Activated naive CD8-positive, alpha-beta T cell treated with anti-CD3 and anti-CD28 coated beads, Interleukin-2, amount 10 ng/mL, durations not matched to agents 7 days and 5 days (primary cell): ENCODE measurements at regions of chr19 and their contacts with region 1.

Region 1: GRCh38 chr19:861763-862580 is 2.5 kb downstream of the CFD start:
- DNase-seq: peak; percentile 81
- ATAC-seq: peak; percentile 23
- H3K4me3 Mint-ChIP-seq: peak overlapping the region; percentile 74
- H3K27ac Mint-ChIP-seq: no peak overlapping the region
- H3K4me1 Mint-ChIP-seq: peaks cover 11% of the 10 kb centered on the region
- H3K27me3 Mint-ChIP-seq: peaks cover 20% of the 10 kb centered on the region

Region 2: GRCh38 chr19:907183-907853 is 45.3 kb after region 1 on chr19:
- POLR2A ChIA-PET with region 1: interaction called, 26 read pairs
- DNase-seq: no peak
- ATAC-seq: no peak
- H3K4me3 Mint-ChIP-seq: peak overlapping the region; percentile 80
- H3K27ac Mint-ChIP-seq: peak overlapping the region; percentile 79
- H3K4me1 Mint-ChIP-seq: peaks cover 36% of the 10 kb centered on the region
- H3K27me3 Mint-ChIP-seq: no peaks in the 10 kb centered on the region

Region 3: GRCh38 chr19:913080-913748 is 51.2 kb after region 1 on chr19 and contains the start of gene R3HDM4:
- POLR2A ChIA-PET with region 1: interaction called, 26 read pairs
- DNase-seq: peak; percentile 92
- ATAC-seq: peak; percentile 53
- H3K4me3 Mint-ChIP-seq: peak within 1 kb of the TSS; percentile 91
- H3K27ac Mint-ChIP-seq: peak within 1 kb of the TSS; percentile 95
- H3K4me1 Mint-ChIP-seq: peaks cover 25% of the 10 kb centered on the region
- H3K27me3 Mint-ChIP-seq: peaks cover 2% of the 10 kb centered on the region
- total RNA-seq, gene R3HDM4: 108 to 113 TPM

Region 4: GRCh38 chr19:984165-984967 is 122.4 kb after region 1 on chr19 and contains the start of gene WDR18:
- POLR2A ChIA-PET with region 1: interaction called, 13 read pairs
- DNase-seq: peak; percentile 92
- ATAC-seq: peak; percentile 86
- H3K4me3 Mint-ChIP-seq: peak within 1 kb of the TSS; percentile 94
- H3K27ac Mint-ChIP-seq: peak within 1 kb of the TSS; percentile 90
- H3K4me1 Mint-ChIP-seq: peaks cover 8% of the 10 kb centered on the region
- H3K27me3 Mint-ChIP-seq: no peaks in the 10 kb centered on the region
- total RNA-seq, gene WDR18: 45.1 to 54.3 TPM